Heart left ventricle (tissue), 16 donors: ENCODE measurements at regions of chr3 and their contacts with region 1.

Region 1: DNA sequence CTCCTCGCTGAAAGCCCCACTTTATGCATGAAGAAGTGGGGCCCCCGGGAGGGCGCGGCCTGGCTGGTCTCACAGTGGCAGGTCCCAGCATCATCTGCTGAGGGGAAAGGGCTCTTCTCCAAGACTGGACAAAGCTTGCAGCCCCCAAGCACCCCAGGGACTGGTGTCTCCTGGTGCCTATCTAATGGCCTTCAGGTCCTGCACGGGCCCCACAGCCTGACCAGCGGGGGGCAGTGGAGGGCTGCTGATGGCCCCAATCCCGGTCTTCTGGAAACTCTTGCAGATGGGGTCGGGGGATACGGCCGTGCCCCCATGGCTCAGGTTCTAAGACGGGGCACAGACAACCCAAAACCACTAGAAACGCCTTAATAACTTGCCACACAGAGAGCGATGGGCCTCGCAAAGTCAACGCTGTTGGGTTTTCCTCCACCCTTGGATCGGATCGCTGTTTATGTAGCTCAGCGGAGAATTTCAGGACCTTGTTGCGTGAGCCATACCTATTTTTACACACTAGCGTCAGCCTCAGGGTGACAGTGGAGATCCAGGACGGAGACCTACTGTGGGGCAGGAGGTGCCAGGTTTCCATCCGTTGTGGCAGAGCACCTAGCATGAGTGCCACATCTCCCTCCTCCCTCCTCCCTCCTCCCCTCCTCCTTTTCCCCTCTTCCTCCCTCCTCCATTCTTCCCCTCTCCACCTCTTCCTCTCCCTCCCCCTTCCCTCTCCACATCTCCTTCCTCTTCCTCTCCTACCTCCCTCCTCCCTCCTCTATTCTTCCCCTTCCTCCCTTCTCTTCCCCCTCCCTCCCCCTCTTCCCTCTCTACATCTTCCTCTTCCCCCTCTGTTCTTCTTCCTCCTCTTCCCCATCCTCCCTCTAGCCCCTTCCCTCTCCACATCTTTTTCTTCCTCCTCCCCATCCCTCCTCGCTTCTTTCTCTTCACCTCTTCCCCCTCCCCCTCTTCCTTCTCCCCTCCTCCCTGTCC is 79.3 kb upstream of the ALDH1L1 start:
- DNase-seq: peak; percentile 56 to 89 (median 76)
- ATAC-seq: peak; percentile 91 to 96 (median 94)
- H3K4me3 ChIP-seq: peak overlapping the region in 10 of 12 donors; percentile 22 to 53 (median 33)
- H3K27ac ChIP-seq: peak overlapping the region in 10 of 12 donors; percentile 36 to 89 (median 73)
- H3K4me1 ChIP-seq: peaks cover 0 to 7% (median 0%) of the 10 kb centered on the region in 12 donors
- H3K27me3 ChIP-seq: no peaks in the 10 kb centered on the region
- CTCF ChIP-seq: peak; percentile 45 to 84 (median 74)
- POLR2A ChIP-seq: peak in 1 of 2 donors; percentile 7

Region 2: DNA sequence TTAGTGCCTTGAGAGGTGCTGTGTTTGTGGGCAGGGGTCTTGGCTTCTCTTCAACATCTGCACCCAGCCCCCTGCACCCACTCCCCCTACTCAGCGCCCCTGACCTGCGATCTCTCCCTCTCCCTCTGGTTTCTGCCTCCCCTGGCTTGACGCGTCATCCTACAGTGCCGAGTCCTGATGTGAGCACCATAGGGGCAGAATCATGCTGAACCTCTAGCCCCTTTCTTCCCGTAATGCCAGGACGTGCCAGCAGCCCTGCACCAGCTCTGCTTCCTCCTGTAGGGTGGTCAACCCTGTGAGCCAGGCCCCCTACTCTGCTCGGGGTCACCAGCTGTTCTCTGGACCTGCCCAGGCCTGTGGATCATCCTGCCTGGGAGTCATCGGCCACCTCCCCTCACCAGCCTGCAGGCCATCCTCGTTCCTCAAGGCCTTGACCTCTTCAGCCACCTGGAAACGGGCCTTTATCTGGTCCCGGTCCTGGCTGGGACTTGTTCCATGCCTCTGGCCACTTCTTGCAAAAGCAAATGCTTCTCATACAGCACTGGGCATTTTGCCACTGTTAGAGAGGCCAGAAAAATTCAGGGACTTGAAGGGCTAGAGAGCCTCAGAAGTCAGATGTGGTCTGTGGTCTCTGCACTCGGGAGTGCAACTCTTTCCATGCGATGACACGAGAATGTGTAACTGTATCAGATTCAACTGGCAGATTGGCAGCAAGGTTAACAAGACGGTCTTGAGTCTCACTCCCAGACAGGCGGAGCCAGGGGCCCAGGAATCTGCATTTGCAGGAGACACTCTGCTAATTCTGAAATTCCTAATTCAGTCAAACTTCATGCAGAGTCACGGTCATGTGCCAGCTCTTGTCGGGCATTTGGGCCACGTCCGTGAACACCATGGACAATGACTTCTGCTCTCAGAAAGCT is 114.2 kb after region 1 on chr3:
- intact Hi-C with region 1: loop called in 2 of 10 experiments (anchors 5 kb)
- DNase-seq: peak in 1 of 5 donors; percentile 22
- ATAC-seq: peak; percentile 29 to 49 (median 38)
- H3K4me3 ChIP-seq: no peak overlapping the region
- H3K27ac ChIP-seq: peak overlapping the region in 2 of 12 donors; percentile 20 to 42
- H3K4me1 ChIP-seq: peaks cover 0 to 30% (median 7%) of the 10 kb centered on the region in 12 donors
- H3K27me3 ChIP-seq: no peaks in the 10 kb centered on the region
- CTCF ChIP-seq: no peak
- POLR2A ChIP-seq: no peak

Region 3: DNA sequence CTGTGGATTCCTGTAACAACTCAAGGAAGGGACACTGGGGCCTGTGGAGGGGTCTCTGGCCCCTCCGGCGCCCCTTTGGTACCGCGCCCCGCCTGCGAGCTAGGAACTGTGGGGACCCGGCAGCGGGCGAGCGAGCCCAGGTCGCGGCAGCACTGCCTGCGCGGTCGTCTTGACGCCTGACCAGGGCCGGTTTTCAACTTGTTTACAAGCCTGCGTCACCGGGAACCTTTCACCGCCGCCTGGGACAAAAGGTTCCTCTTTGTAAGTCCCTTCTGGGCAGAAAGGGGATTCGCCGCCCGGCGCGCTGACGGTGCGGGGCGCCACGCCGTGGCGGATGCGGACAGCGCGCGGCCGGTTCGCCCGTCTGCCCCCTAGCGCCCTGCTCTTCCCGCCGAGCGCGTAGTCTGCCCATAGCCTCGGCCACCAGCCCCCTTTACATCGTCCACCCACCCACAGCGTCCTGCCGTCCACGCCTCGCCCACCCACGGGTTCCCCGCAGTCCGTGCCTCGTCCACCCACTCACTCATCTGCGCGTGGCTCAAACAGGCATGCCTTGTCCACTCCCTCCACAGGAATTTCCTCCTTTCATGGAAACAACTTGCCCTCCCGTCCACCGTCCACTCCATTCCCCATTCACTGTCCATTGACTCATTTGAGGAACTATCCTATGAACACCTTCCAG is 129.6 kb after region 1 on chr3:
- intact Hi-C with region 1: loop called (anchors 1 to 5 kb)
- DNase-seq: peak; percentile 83 to 96 (median 93)
- ATAC-seq: peak; percentile 88 to 98 (median 96)
- H3K4me3 ChIP-seq: peak overlapping the region in 11 of 12 donors; percentile 4 to 63 (median 53)
- H3K27ac ChIP-seq: peak overlapping the region; percentile 69 to 88 (median 82)
- H3K4me1 ChIP-seq: peaks cover 0 to 10% (median 5%) of the 10 kb centered on the region in 12 donors
- H3K27me3 ChIP-seq: peaks cover 0 to 12% (median 0%) of the 10 kb centered on the region in 9 donors
- CTCF ChIP-seq: peak; percentile 78 to 100 (median 98)
- POLR2A ChIP-seq: peak in 1 of 2 donors; percentile 55

Region 4: GRCh38 chr3:126475413-126476114 is 215.9 kb after region 1 on chr3 and contains the start of gene ZXDC:
- intact Hi-C with region 1: loop called in 2 of 10 experiments (anchors 5 to 10 kb)
- DNase-seq: peak; percentile 95 to 98 (median 96)
- ATAC-seq: peak; percentile 83 to 89 (median 87)
- H3K4me3 ChIP-seq: peak within 1 kb of the TSS; percentile 63 to 90 (median 80)
- H3K27ac ChIP-seq: peak within 1 kb of the TSS; percentile 85 to 97 (median 92)
- H3K4me1 ChIP-seq: peaks cover 0 to 54% (median 42%) of the 10 kb centered on the region in 12 donors
- H3K27me3 ChIP-seq: no peaks in the 10 kb centered on the region
- CTCF ChIP-seq: peak in 9 of 12 donors; percentile 18 to 70 (median 51)
- POLR2A ChIP-seq: peak in 1 of 2 donors; percentile 50
- total RNA-seq, gene ZXDC: 15.4 to 40.3 (median 20.2) TPM